ENCODE measurements at regions of chr15 and their contacts with region 1.

Region 1: GRCh38 chr15:82709421-82710207 is at the start of gene AP3B2:
- DNase-seq: peak; percentile 85
- ATAC-seq: peak; percentile 97
- H3K4me3 Mint-ChIP-seq: peak within 1 kb of the TSS; percentile 52
- H3K27ac Mint-ChIP-seq: no peak within 1 kb of the TSS
- H3K4me1 Mint-ChIP-seq: no peaks in the 10 kb centered on the region
- H3K27me3 Mint-ChIP-seq: peaks cover 15% of the 10 kb centered on the region
- total RNA-seq, gene AP3B2: 0.39 to 0.59 TPM

Region 2: DNA sequence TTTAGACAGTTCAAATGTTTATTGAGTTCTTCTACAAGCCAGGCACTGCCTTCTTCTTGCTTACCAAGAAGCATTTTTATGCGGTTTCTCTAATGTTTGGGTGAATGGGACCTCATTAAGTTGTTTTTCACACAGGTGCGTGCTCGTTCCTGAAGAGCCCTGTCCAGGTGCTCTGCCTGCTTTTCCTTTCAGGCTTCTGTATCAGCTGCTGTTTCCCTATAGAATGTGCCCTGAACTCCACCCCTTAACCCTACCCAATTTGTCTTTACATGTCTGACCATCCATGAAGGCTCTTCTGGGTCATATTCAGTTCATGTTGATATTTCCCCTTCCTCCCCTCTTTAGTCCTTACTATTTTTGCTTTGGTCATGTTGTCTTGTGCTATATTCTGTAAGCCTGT is 338.0 kb before region 1 on chr15:
- CTCF ChIA-PET with region 1: no interaction called
- POLR2A ChIA-PET with region 1: no interaction called
- intact Hi-C with region 1: no loop called
- DNase-seq: no peak
- ATAC-seq: no peak
- H3K4me3 Mint-ChIP-seq: no peak overlapping the region
- H3K27ac Mint-ChIP-seq: no peak overlapping the region
- H3K4me1 Mint-ChIP-seq: peaks cover 4% of the 10 kb centered on the region
- H3K27me3 Mint-ChIP-seq: no peaks in the 10 kb centered on the region

Region 3: DNA sequence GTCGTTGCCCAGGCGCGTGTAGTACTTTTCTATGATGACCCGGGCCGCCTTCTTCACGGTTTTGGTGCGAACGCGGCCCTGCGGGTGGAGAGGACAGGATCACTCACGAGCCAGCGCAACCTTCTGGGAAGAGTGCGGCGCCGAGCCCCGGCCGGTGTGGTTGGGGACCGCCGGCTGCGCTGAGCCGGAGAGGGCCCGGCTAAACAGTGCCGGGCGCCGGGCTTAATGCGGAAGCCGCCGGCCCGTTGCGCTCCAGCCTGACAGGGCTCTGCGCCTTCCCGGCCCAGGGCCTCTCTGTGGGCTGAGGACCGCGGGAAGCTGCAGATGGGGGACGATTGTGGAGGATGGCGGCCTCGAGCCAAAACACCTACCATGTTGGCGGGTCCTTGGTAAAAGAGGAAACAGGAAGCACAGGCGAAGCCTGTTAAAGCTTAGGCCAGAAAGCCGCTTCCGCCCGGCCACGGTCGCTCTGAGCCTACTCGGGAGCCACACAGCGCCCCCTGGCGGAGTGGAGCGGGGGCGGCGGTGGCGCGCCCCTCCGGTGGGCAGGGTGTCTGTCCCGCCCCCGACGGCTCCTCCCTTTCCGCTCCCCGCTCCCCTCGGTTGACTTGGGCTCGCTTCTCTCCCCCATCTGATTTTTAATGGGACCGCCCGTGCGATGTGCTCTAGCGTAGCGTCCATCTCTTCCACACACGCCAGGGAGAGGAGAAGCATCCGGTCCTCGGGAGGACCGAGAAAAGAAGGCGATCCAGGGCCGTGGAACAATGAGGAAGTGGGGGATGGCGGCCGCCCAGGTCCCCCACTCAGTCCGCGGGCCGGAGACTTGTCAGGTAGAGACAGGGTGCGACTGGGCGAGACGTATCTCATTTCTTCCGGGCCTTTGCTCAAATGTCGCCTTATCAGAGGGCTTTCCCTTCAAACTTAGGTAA is 169.3 kb before region 1 on chr15 and contains the start of gene RPS17:
- CTCF ChIA-PET with region 1: no interaction called
- POLR2A ChIA-PET with region 1: interaction called, 3 read pairs
- intact Hi-C with region 1: loop called in 1 of 2 experiments (anchors 2 kb)
- DNase-seq: peak; percentile 99
- ATAC-seq: peak; percentile 93
- H3K4me3 Mint-ChIP-seq: peak within 1 kb of the TSS; percentile 96
- H3K27ac Mint-ChIP-seq: peak within 1 kb of the TSS; percentile 96
- H3K4me1 Mint-ChIP-seq: peaks cover 23% of the 10 kb centered on the region
- H3K27me3 Mint-ChIP-seq: no peaks in the 10 kb centered on the region
- total RNA-seq, gene RPS17: 2,882 to 3,294 TPM

Region 4: DNA sequence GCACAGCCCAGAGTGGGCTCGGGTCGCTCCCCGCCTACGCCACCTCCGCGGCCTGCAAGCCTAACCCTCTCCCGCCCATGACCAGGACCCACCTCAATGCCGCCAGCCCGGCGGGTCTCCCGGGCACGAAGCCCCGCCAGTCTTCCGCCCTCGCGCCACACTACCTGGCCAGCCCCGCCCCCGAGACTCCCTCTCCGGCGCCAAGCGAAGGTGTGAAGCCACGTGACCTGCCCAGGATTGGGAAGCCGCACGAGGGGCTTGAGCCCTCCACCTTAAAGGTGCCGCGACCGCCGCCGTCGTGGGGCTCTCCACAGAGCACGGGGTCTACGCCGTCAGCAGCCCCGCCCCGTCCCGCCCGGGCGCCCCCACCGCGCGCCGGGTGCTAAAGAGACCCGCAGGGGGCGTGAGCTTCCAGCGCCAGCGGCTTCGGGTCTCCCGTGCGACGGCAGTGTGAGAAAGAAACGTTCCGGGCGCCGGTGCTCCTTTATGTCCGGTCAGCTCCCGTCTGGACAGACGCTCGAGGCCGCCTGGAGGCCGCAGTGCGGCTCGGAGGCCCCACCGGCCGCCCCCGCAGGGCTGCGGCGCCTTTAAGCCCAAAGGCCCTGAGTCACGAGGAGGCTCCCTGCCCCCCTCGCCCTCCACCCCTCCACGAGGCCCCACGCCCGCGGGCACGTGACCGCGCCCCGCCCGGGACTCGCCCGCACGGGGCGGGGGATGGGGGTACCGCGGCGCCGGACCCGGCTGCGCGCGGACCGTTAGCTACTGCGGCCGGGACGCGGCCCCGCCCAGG is 62.4 kb before region 1 on chr15 and contains the start of gene CPEB1:
- CTCF ChIA-PET with region 1: no interaction called
- POLR2A ChIA-PET with region 1: no interaction called
- intact Hi-C with region 1: loop called in 1 of 2 experiments (anchors 1 kb)
- DNase-seq: peak; percentile 60
- ATAC-seq: peak; percentile 66
- H3K4me3 Mint-ChIP-seq: no peak within 1 kb of the TSS
- H3K27ac Mint-ChIP-seq: no peak within 1 kb of the TSS
- H3K4me1 Mint-ChIP-seq: peaks cover 3% of the 10 kb centered on the region
- H3K27me3 Mint-ChIP-seq: peaks cover 42% of the 10 kb centered on the region
- total RNA-seq, gene CPEB1: 0.16 to 0.18 TPM

Region 5: DNA sequence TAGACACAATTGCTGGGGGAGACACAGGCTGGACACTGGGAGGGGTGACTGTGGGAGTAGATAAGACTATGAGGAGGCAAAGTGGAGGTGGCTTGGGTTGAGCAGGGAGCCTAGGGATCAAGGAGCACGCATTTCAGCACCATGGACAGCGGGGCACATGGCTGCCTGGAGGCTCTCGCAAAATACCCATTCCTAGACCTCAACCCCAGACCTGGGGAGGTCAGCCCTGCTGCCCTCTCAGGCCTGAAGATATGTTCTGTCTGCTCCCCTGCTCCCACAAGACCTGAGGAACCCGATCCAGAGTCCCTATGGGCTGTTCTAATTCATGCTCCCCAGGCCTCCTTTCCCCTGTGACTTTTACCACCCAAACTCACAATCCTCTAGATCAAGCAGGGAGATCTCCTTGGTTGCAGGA is 46.4 kb before region 1 on chr15:
- CTCF ChIA-PET with region 1: no interaction called
- POLR2A ChIA-PET with region 1: no interaction called
- intact Hi-C with region 1: loop called (anchors 1 kb)
- DNase-seq: peak; percentile 75
- ATAC-seq: peak; percentile 61
- H3K4me3 Mint-ChIP-seq: no peak overlapping the region
- H3K27ac Mint-ChIP-seq: no peak overlapping the region
- H3K4me1 Mint-ChIP-seq: no peaks in the 10 kb centered on the region
- H3K27me3 Mint-ChIP-seq: peaks cover 11% of the 10 kb centered on the region

Region 6: GRCh38 chr15:82680200-82681102 is 29.2 kb before region 1 on chr15:
- CTCF ChIA-PET with region 1: interaction called, 6 read pairs
- POLR2A ChIA-PET with region 1: no interaction called
- intact Hi-C with region 1: loop called (anchors 1 to 2 kb)
- DNase-seq: peak; percentile 90
- ATAC-seq: peak; percentile 96
- H3K4me3 Mint-ChIP-seq: peak overlapping the region; percentile 80
- H3K27ac Mint-ChIP-seq: peak overlapping the region; percentile 85
- H3K4me1 Mint-ChIP-seq: peaks cover 10% of the 10 kb centered on the region
- H3K27me3 Mint-ChIP-seq: peaks cover 7% of the 10 kb centered on the region

Region 7: GRCh38 chr15:82726816-82727215 is 17.2 kb after region 1 on chr15:
- CTCF ChIA-PET with region 1: no interaction called
- POLR2A ChIA-PET with region 1: no interaction called
- intact Hi-C with region 1: no loop called
- DNase-seq: no peak
- ATAC-seq: no peak
- H3K4me3 Mint-ChIP-seq: no peak overlapping the region
- H3K27ac Mint-ChIP-seq: no peak overlapping the region
- H3K4me1 Mint-ChIP-seq: no peaks in the 10 kb centered on the region
- H3K27me3 Mint-ChIP-seq: peaks cover 2% of the 10 kb centered on the region

Region 8: GRCh38 chr15:82749951-82750830 is 40.6 kb after region 1 on chr15:
- CTCF ChIA-PET with region 1: no interaction called
- POLR2A ChIA-PET with region 1: no interaction called
- intact Hi-C with region 1: loop called (anchors 1 kb)
- DNase-seq: peak; percentile 91
- ATAC-seq: peak; percentile 95
- H3K4me3 Mint-ChIP-seq: peak overlapping the region; percentile 86
- H3K27ac Mint-ChIP-seq: peak overlapping the region; percentile 98
- H3K4me1 Mint-ChIP-seq: peaks cover 44% of the 10 kb centered on the region
- H3K27me3 Mint-ChIP-seq: no peaks in the 10 kb centered on the region

Region 9: DNA sequence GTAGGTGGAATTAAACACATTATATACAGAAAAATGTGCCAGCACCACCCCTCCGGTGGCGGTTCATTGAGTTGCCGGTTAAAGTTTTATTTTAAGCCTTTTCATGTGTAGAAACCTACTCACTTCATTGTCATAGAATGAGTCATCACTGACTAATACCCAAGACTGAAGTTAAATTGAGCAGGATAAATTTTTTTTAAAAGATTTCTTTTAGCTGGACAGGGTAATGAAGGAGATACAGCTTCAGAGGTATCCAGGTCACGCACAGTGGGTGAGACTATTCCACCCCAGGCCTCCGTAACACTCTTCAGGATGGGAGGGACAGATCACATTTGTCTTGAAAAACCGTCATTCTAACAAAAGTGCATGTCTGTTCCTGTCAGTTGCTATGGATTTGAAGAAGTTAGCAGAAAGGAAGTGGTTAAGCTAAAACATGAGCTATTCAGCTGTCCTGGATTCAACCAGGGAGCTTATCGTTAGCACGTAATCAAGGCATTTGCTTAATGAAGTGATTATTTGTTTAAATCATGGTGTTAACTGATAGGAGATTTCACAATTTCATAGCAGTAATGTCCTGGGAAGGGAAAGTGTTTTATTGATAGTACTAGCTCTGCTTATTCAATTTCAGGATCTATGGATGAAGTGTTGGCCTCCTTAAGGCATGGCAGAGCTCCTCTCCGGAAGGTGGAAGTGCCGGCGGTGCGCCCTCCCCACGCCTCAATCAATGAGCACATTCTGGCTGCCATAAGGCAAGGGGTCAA is 123.2 kb after region 1 on chr15:
- CTCF ChIA-PET with region 1: no interaction called
- POLR2A ChIA-PET with region 1: no interaction called
- intact Hi-C with region 1: loop called in 1 of 2 experiments (anchors 1 kb)
- DNase-seq: peak; percentile 72
- ATAC-seq: peak; percentile 92
- H3K4me3 Mint-ChIP-seq: no peak overlapping the region
- H3K27ac Mint-ChIP-seq: peak overlapping the region; percentile 7
- H3K4me1 Mint-ChIP-seq: peaks cover 34% of the 10 kb centered on the region
- H3K27me3 Mint-ChIP-seq: no peaks in the 10 kb centered on the region